B cell (primary cell): ENCODE measurements at regions of chr17 and their contacts with region 1.

Region 1: GRCh38 chr17:16449121-16449570 is 33.8 kb downstream of the TRPV2 start:
- DNase-seq: no peak
- ATAC-seq: no peak
- H3K4me3 ChIP-seq: no peak overlapping the region
- H3K4me3 Mint-ChIP-seq: no peak overlapping the region
- H3K27ac ChIP-seq: no peak overlapping the region
- H3K27ac Mint-ChIP-seq: no peak overlapping the region
- H3K4me1 ChIP-seq: no peaks in the 10 kb centered on the region
- H3K4me1 Mint-ChIP-seq: peaks cover 3% of the 10 kb centered on the region
- H3K27me3 ChIP-seq: no peaks in the 10 kb centered on the region
- H3K27me3 Mint-ChIP-seq: no peaks in the 10 kb centered on the region
- CTCF ChIP-seq: no peak

Region 2: DNA sequence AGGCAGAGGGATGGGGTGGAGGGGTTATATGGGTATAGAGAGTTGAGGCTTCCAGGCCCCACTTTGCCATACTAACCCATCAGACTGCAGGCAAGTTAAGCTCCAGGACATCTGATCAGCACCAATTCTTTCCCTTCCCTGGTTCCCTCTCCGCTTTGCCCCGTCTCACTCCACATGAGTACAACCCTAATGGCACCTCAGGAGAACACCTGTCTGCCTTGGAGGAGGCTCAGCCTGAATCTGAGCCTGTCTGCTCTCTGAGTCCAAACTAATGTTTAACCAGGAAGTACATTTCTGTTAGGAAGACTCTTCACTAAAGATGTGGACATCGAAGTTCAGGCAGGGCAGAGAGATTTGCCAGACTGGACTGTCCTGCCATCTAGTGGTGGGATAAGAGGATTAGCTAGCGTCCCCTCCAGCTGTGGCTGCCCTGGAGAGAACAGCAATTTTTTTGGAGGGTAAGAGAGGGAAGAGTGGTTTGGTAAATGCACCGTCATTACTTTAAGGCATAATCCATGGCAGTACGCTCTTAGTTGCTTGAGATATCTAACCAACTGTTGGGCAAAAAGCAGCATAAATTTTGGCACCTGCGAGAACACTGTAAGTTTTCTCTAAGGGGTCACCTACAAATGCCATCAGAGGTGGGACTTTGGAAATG is 72.1 kb after region 1 on chr17:
- CTCF ChIA-PET with region 1: interaction called, 49 read pairs
- POLR2A ChIA-PET with region 1: no interaction called
- intact Hi-C with region 1: loop called (anchors 1 kb)
- DNase-seq: peak; percentile 80
- ATAC-seq: peak; percentile 88
- H3K4me3 ChIP-seq: no peak overlapping the region
- H3K4me3 Mint-ChIP-seq: no peak overlapping the region
- H3K27ac ChIP-seq: no peak overlapping the region
- H3K27ac Mint-ChIP-seq: no peak overlapping the region
- H3K4me1 ChIP-seq: peaks cover 0 to 4% of the 10 kb centered on the region in 2 donors
- H3K4me1 Mint-ChIP-seq: peaks cover 7% of the 10 kb centered on the region
- H3K27me3 ChIP-seq: peaks cover 0 to 18% (median 7%) of the 10 kb centered on the region in 4 experiments
- H3K27me3 Mint-ChIP-seq: peaks cover 51% of the 10 kb centered on the region
- CTCF ChIP-seq: peak; percentile 86

Region 3: DNA sequence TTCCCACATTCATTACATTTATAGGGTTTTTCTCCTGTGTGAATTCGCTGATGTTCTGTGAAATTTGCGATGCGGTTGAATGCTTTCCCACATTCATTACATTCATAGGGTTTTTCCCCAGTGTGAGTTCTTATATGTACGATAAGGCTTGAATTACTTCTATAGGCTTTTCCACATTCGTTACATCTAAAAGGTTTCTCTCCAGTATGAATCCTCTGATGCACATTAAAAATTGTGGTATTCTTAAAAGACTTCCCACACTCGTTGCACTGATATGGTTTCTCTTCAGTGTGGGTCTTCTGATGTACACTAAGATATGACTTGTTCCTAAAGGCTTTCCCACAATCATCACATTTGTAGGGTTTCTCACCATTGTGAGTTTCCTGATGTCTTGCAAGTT is 174.1 kb after region 1 on chr17:
- CTCF ChIA-PET with region 1: no interaction called
- POLR2A ChIA-PET with region 1: no interaction called
- intact Hi-C with region 1: no loop called
- DNase-seq: no peak
- ATAC-seq: no peak
- H3K4me3 ChIP-seq: no peak overlapping the region
- H3K4me3 Mint-ChIP-seq: no peak overlapping the region
- H3K27ac ChIP-seq: no peak overlapping the region
- H3K27ac Mint-ChIP-seq: no peak overlapping the region
- H3K4me1 ChIP-seq: no peaks in the 10 kb centered on the region
- H3K4me1 Mint-ChIP-seq: no peaks in the 10 kb centered on the region
- H3K27me3 ChIP-seq: no peaks in the 10 kb centered on the region
- H3K27me3 Mint-ChIP-seq: no peaks in the 10 kb centered on the region
- CTCF ChIP-seq: no peak